A549 (cell line): ENCODE measurements at regions of chr22 and their contacts with region 1.

Region 1: GRCh38 chr22:18077639-18078328 is at the start of gene PEX26:
- DNase-seq: peak; percentile 82 to 93
- ATAC-seq: peak; percentile 98 to 99
- H3K4me3 ChIP-seq: peak within 1 kb of the TSS; percentile 64
- H3K27ac ChIP-seq: peak within 1 kb of the TSS; percentile 90 to 97
- H3K4me1 ChIP-seq: peaks cover 24% of the 10 kb centered on the region
- CTCF ChIP-seq: no peak
- EP300 ChIP-seq: no peak
- POLR2A ChIP-seq: peak; percentile 38
- RAD21 ChIP-seq: no peak
- polyA plus RNA-seq, gene PEX26: 12.4 and 15.3 TPM in 2 replicates

Region 2: DNA sequence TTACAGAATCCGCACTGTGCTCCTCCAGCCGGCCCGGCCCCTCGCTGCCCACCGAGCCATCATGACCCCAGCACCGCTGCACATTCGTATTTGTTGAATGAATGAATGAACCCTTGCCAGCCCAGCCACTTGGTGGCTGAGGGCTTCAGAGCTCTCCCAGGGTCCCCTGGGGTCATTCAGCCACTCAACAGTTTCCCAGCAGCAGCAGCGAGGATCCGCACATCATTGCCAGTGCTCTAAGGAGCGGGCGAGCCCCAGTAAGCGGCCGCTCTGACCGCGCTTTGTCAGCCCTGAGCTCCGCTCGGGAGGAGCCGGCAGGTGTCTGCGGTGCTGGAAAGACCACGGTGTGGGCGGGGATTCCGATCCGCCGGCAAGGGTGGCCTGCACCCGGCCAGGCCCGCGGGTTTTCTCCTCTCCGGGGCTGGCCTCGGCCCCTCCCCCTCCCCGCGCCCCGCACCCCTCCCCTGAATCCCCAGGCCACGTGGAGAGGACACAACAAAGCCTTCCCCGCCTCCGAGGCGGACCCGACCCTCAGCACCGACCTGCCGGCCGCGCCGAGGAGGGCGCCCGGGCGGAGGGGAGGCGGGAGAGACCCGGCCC is 304.1 kb before region 1 on chr22:
- CTCF ChIA-PET with region 1: no interaction called
- POLR2A ChIA-PET with region 1: no interaction called
- DNase-seq: peak; percentile 12 to 33
- ATAC-seq: peak; percentile 54 to 75
- H3K4me3 ChIP-seq: peak overlapping the region; percentile 98
- H3K27ac ChIP-seq: peak overlapping the region; percentile 95 to 98
- H3K4me1 ChIP-seq: peaks cover 17% of the 10 kb centered on the region
- CTCF ChIP-seq: no peak
- EP300 ChIP-seq: no peak
- POLR2A ChIP-seq: no peak
- RAD21 ChIP-seq: no peak

Region 3: DNA sequence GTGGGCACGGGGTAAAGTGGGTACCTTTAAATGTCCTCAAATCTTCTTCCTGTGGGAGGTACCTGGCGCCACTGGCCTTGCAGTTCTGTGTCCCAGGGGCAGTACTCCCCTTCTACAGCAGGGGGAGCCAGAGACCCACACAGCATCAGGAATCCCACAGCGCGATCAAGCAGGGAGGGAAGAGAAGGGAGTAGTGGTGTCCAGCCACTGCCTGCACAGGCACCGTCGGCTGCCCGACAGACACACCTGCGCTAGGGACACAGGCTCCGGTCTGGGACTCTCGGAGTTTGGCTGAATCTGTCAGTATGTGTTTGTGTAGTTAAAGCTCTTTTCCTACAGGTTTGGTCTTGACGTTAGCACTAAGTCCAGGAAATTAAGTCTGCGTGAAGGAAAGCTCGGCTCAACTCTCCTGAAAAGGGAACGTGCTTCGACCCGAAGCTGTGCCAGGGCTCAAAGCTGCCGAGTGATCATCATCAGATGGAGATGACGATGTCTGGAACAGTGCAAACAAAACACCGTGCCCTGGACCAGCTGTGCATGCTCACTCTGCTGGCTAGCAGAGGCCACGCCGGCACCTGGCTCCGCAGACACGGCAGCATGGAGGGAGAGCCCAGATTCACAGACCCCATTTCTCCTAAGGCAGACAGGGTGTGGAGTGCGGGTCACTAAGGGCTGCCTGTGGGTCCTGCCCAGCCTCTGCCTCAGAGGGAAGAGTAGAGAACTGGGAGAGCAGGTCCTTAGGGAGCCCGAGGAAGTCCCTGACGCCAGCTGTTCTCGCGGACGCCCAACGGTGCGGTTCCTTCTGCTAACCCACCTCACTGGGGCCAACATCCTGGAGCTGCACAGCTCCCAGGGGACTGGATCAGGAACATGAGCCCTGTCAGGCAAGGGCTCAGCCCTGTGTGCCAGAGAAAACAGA is 247.5 kb before region 1 on chr22:
- CTCF ChIA-PET with region 1: interaction called, 138 read pairs
- POLR2A ChIA-PET with region 1: interaction called, 6 read pairs
- DNase-seq: peak; percentile 77
- ATAC-seq: peak; percentile 90 to 95
- H3K4me3 ChIP-seq: no peak overlapping the region
- H3K27ac ChIP-seq: no peak overlapping the region
- H3K4me1 ChIP-seq: no peaks in the 10 kb centered on the region
- CTCF ChIP-seq: peak; percentile 71
- EP300 ChIP-seq: no peak
- POLR2A ChIP-seq: no peak
- RAD21 ChIP-seq: peak; percentile 85 to 92

Region 4: DNA sequence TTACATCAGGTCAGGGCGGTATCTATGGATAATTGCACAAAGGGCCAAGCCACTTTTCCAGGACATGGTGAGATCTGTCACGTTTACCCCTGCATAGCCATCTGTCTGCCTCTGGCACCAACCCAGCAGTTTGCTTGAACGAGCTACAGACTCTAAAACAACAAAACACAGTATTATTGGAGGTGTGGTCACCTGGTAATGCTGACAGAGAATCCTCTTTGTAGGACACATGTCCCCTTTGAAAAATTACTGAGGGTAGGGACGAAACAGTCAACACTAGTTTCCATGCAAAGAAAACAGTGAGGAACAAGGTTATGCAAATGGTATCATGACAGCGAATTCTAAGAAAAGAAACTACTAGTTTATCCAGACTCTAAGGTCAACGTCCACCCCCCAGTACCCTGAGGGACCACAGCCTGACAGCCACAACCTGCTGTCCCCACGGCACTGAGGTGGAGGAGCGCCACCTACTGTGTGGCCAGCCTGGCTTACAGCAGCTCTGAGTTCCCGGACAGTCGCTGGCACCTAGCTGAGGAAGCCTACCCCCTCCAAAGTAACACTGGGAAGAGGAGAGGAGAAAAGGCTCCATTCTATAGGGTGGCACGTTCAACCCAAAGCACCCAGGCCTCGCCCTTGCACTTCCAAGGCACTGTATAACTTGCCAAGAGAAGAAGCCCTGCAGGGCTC is 186.2 kb before region 1 on chr22:
- CTCF ChIA-PET with region 1: interaction called, 12 read pairs
- POLR2A ChIA-PET with region 1: no interaction called
- DNase-seq: peak in 1 of 2 experiments; percentile 7
- ATAC-seq: peak; percentile 43 to 79; a peak in 3 of 6 replicates
- H3K4me3 ChIP-seq: no peak overlapping the region
- H3K27ac ChIP-seq: no peak overlapping the region
- H3K4me1 ChIP-seq: peaks cover 22% of the 10 kb centered on the region
- CTCF ChIP-seq: peak; percentile 26; the same call in 1 of the 3 replicates
- EP300 ChIP-seq: no peak
- POLR2A ChIP-seq: no peak
- RAD21 ChIP-seq: no peak; a peak in 1 of 5 replicates

Region 5: DNA sequence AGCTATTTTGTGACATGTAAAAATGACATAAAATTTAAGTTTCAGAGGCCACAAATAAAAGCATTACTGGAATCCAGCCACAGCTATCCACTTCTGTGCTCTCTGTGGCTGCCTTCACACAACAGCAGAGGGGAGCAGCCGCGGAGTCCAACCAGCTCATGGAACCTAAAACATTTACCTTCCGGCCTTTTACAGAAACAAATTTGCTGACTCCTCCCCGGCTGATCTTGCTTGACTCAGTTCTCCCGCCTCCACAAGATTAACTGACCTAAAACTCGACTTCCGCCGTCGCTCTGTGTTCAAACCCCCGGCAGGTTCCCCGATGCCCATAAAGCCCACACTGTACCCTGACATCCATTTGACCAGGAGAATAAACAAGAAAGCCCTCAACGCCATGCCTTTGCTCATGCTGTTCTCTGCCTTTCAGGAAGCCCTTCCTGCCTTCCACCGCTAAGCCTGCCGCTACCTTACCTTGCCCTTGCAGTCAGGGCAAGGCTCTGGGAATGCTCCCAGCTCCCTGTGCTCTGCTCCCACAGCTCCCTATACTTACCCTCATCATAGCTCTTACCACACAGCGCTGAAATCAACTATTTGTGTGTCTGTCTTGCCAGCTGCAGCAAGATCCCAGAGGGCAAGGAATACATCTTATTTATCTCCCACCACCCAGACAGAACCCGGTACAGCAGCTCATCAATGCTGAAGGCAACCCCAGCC is 88.8 kb before region 1 on chr22:
- CTCF ChIA-PET with region 1: interaction called, 107 read pairs
- POLR2A ChIA-PET with region 1: no interaction called
- DNase-seq: no peak
- ATAC-seq: 0 out of 6 replicates have a peak, but pooled peaks of 1 of the 2 experiments have one; percentile 43
- H3K4me3 ChIP-seq: no peak overlapping the region
- H3K27ac ChIP-seq: peak overlapping the region; percentile 8 to 75; a peak in 4 of 6 replicates
- H3K4me1 ChIP-seq: peaks cover 62% of the 10 kb centered on the region
- CTCF ChIP-seq: no peak
- EP300 ChIP-seq: no peak
- POLR2A ChIP-seq: no peak
- RAD21 ChIP-seq: no peak

Region 6: GRCh38 chr22:18031695-18032454 is 45.9 kb before region 1 on chr22:
- CTCF ChIA-PET with region 1: interaction called, 57 read pairs
- POLR2A ChIA-PET with region 1: interaction called, 3 read pairs
- DNase-seq: peak; percentile 48 to 80
- ATAC-seq: peak; percentile 88 to 89
- H3K4me3 ChIP-seq: no peak overlapping the region
- H3K27ac ChIP-seq: peak overlapping the region; percentile 85 to 91
- H3K4me1 ChIP-seq: peaks cover 57% of the 10 kb centered on the region
- CTCF ChIP-seq: no peak
- EP300 ChIP-seq: no peak; a peak in 1 of 5 replicates
- POLR2A ChIP-seq: no peak
- RAD21 ChIP-seq: no peak

Region 7: GRCh38 chr22:18065256-18065655 is 12.5 kb before region 1 on chr22:
- CTCF ChIA-PET with region 1: interaction called, 38 read pairs
- POLR2A ChIA-PET with region 1: no interaction called
- DNase-seq: peak in 1 of 2 experiments; percentile 42
- ATAC-seq: peak in 1 of 2 experiments; percentile 52; a peak in 3 of 6 replicates
- H3K4me3 ChIP-seq: no peak overlapping the region
- H3K27ac ChIP-seq: peak overlapping the region; percentile 59 to 78; a peak in 5 of 6 replicates
- H3K4me1 ChIP-seq: peaks cover 49% of the 10 kb centered on the region
- CTCF ChIP-seq: no peak
- EP300 ChIP-seq: no peak
- POLR2A ChIP-seq: no peak
- RAD21 ChIP-seq: peak; percentile 26 to 30; a peak in 1 of 5 replicates